ENCODE measurements at regions of chr6 and their contacts with region 1.

Region 1: DNA sequence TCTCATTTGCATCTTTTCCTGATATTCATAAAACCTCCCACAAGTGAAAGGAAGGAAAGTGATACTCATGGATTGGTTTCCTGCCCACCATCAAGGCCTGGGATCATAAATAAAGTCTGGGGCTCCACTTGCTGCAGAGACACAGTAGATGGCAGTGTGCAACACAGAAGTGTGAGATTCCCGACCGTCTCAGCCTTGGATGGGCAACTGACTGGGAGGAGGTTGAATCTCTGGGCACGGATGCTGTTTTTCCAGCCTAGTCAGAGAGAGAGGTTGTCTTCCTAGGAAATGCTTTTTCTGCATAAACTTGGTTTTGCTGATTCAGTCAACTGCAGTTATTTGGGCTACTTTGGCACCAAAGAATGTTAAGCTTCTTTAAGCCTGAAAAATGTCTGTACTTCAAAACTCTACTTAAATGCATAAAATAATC is 9.9 kb upstream of the RFPL4B start:
- DNase-seq: peak; percentile 72
- ATAC-seq: peak; percentile 87
- H3K4me3 ChIP-seq: no peak overlapping the region
- H3K27ac ChIP-seq: no peak overlapping the region
- H3K4me1 ChIP-seq: no peaks in the 10 kb centered on the region
- H3K27me3 ChIP-seq: no peaks in the 10 kb centered on the region
- CTCF ChIP-seq: peak; percentile 71

Region 2: DNA sequence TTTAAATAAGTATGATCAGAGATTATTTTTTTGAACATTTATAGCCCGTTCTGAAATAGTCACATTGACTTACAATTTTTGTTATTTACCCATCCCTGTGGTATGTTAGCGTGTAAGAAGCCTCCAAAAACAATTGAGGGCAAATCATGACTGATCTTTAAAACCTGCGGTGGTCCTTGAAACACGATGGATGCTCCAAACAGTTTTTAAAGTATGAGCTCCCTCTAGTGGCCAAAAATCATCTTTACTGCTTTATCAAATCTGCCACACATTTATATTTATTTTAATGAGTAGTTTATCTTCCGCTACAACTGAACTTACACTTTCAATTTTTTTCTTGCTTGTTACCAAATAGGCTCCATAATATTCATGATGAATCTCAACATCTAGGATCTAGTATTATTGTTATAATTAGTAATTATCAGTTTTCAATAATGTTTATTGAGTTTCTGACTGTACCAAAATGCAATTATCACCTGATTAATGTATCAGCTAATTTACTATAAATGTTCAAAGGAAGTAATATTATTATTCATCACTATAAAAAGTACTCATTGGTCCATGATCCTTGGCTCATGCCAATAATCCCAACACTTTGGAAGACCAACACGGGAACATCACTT is 1572.1 kb after region 1 on chr6:
- CTCF ChIA-PET with region 1: no interaction called
- POLR2A ChIA-PET with region 1: no interaction called
- intact Hi-C with region 1: loop called (anchors 1 kb)
- DNase-seq: peak; percentile 75
- ATAC-seq: 0 out of 2 replicates have a peak, but pooled peaks have one; percentile 22
- H3K4me3 ChIP-seq: no peak overlapping the region
- H3K27ac ChIP-seq: no peak overlapping the region
- H3K4me1 ChIP-seq: no peaks in the 10 kb centered on the region
- H3K27me3 ChIP-seq: no peaks in the 10 kb centered on the region
- CTCF ChIP-seq: peak; percentile 76

Measured in PC-3 (cell line).